ENCODE measurements at regions of chr12 and their contacts with region 1.

Region 1: GRCh38 chr12:51923501-51924271 is 16.4 kb downstream of the ACVRL1 start:
- H3K4me3 Mint-ChIP-seq: peak overlapping the region; percentile 14
- H3K27ac Mint-ChIP-seq: peak overlapping the region; percentile 71
- H3K4me1 Mint-ChIP-seq: peaks cover 48% of the 10 kb centered on the region
- H3K27me3 Mint-ChIP-seq: peaks cover 22% of the 10 kb centered on the region

Region 2: GRCh38 chr12:51721282-51721940 is 202.3 kb before region 1 on chr12:
- intact Hi-C with region 1: no loop called
- H3K4me3 Mint-ChIP-seq: peak overlapping the region; percentile 22
- H3K27ac Mint-ChIP-seq: no peak overlapping the region
- H3K4me1 Mint-ChIP-seq: peaks cover 15% of the 10 kb centered on the region
- H3K27me3 Mint-ChIP-seq: peaks cover 26% of the 10 kb centered on the region

Region 3: GRCh38 chr12:51874013-51874412 is 49.7 kb before region 1 on chr12:
- intact Hi-C with region 1: no loop called
- H3K4me3 Mint-ChIP-seq: no peak overlapping the region
- H3K27ac Mint-ChIP-seq: no peak overlapping the region
- H3K4me1 Mint-ChIP-seq: peaks cover 35% of the 10 kb centered on the region
- H3K27me3 Mint-ChIP-seq: peaks cover 19% of the 10 kb centered on the region

Region 4: DNA sequence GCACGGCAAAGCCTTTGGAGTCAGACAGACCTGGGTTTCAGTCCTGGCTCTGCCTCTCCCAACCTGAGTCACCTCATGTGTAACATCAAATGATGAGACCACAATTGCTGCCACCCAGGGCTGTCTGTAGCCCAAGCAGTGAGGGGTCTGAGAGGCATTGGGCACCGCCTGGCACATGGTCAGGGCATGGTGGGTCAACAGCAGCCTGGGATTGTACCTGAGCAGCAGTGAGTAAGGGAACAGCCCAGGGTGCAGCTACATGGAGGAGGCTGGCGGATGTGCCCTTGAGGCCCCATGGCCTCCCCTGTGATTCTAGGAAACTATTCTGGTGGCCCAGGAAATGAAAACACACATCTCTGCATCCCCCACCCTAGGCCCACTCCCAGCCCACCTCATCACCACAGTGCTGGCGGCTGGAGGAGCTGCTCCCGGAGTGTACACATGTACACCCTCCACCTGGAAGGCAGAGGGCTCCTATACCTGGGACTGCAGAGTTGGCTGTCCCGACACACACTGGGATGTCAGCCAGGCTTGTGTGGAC is 28.1 kb before region 1 on chr12:
- intact Hi-C with region 1: loop called (anchors 2 kb)
- H3K4me3 Mint-ChIP-seq: no peak overlapping the region
- H3K27ac Mint-ChIP-seq: peak overlapping the region; percentile 23
- H3K4me1 Mint-ChIP-seq: peaks cover 39% of the 10 kb centered on the region
- H3K27me3 Mint-ChIP-seq: peaks cover 14% of the 10 kb centered on the region

Region 5: GRCh38 chr12:51905471-51906429 is 17.9 kb before region 1 on chr12:
- intact Hi-C with region 1: loop called (anchors 2 kb)
- H3K4me3 Mint-ChIP-seq: peak overlapping the region; percentile 23
- H3K27ac Mint-ChIP-seq: peak overlapping the region; percentile 90
- H3K4me1 Mint-ChIP-seq: peaks cover 53% of the 10 kb centered on the region
- H3K27me3 Mint-ChIP-seq: peaks cover 33% of the 10 kb centered on the region

Region 6: DNA sequence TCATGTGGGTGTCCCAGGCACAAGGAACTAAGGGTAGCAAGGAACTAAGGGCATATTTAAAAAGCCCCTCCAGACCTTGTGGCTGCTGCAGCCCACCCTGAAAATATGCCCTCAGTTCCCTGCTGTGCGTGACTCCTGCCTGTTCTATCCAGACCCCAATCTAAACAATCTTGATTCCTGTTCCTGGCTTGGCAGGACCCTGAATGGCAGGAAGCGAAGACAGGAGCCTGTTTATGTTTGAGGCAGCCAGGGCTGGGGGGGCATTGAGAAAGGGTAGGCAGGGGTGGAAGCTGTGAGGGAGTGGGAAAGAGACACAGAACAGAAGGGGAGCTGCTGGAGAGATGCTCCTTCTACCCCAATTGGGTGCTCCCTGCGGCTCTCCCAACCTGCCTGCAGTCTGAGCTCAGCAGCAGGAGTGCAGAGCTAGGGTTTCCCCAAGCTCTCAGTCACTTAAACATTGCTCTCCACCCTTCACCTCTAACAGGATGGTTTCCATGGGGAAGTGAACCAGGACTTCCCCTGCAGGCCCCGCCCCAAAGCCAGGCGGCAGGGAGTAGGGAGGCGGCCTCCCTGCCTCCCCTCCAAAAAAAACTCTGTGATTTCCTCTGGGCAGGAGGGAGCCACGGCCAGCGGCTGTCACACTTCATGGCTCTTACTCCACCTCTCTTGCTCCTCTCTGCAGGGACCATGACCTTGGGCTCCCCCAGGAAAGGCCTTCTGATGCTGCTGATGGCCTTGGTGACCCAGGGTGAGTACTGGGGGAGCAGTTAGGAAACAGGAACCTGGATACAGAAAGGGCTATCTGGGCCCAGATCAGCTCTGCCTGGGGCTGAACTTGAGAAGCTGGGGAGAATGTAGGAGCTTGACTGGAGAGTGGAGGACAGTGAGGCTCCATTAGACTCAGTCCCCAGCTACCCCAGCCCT is 11.6 kb before region 1 on chr12:
- intact Hi-C with region 1: loop called (anchors 1 kb)
- H3K4me3 Mint-ChIP-seq: peak overlapping the region; percentile 57
- H3K27ac Mint-ChIP-seq: peak overlapping the region; percentile 79
- H3K4me1 Mint-ChIP-seq: peaks cover 60% of the 10 kb centered on the region
- H3K27me3 Mint-ChIP-seq: peaks cover 33% of the 10 kb centered on the region

Region 7: DNA sequence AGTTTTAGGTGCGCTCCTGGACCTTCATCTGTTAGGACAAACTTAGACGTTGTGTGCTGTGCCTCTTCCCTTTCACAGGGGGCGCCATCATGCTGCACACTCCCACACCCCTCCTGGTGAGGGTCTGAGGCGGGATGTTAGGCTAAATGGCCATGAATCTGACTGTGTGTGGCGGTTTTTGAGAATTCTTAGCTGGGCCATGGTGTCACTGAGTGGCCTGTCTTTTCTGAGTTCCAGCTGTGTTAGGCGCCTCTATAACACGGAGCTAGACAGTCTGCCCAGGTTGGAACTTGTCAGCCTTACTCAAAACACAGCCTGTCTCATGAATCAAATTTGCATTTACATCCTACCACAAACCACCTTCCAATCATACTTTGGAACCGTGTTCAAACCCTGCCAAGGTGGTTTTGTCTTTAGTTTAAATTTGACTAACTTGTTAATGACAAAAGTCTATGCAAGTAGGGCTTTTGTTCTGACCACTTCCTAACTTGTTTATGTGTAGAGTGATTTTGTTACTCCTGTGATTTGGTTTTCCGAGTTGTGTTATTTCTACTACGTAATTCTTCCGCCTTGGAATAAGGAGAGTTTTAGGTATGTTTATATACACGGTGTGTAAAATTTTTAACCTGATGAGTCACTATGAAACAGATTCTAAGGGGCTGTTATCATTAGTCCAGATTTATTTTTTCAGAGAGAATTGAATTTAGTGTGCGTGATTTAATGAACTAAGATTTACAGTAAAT is 47.4 kb after region 1 on chr12:
- intact Hi-C with region 1: loop called (anchors 10 kb)
- H3K4me3 Mint-ChIP-seq: peak overlapping the region; percentile 2
- H3K27ac Mint-ChIP-seq: peak overlapping the region; percentile 73
- H3K4me1 Mint-ChIP-seq: peaks cover 62% of the 10 kb centered on the region
- H3K27me3 Mint-ChIP-seq: no peaks in the 10 kb centered on the region

Measured in dendritic cell treated with granulocyte-macrophage colony-stimulating factor and Interleukin-4, amounts not matched to agents 40 ng/mL and 50 ng/mL, for 4 days (primary cell).